Breast epithelium (tissue), 4 donors: ENCODE measurements at regions of chr2 and their contacts with region 1.

Region 1: DNA sequence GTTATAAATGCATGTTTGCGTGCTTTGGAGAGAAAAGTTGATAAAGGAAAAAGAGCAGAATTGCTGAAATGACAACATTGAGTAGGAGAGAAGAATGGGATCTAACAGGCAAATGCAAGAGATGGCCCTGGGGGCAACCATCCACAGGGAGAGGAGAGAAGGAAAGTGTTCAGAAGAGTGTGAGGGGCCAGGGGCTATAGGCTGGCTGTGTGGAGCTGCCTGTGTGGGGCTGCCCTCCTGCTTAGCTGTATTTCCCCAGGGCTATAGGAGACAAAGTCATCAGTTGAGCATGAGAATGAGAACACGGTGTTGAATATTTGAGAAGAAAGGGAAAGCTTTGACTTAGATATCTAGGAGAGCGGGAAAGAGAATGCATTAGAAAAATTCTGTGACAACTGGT is 572.0 kb downstream of the SOX11 start:
- DNase-seq: no peak
- H3K4me3 ChIP-seq: no peak overlapping the region
- H3K27ac ChIP-seq: no peak overlapping the region
- H3K4me1 ChIP-seq: no peaks in the 10 kb centered on the region
- H3K27me3 ChIP-seq: no peaks in the 10 kb centered on the region
- CTCF ChIP-seq: no peak
- POLR2A ChIP-seq: no peak

Region 2: GRCh38 chr2:6214471-6214870 is 49.7 kb before region 1 on chr2:
- intact Hi-C with region 1: loop called (anchors 2 kb)
- DNase-seq: no peak
- H3K4me3 ChIP-seq: no peak overlapping the region
- H3K27ac ChIP-seq: no peak overlapping the region
- H3K4me1 ChIP-seq: no peaks in the 10 kb centered on the region
- H3K27me3 ChIP-seq: no peaks in the 10 kb centered on the region
- CTCF ChIP-seq: no peak
- POLR2A ChIP-seq: no peak